PC-3 (cell line): ENCODE measurements at regions of chr4 and their contacts with region 1.

Region 1: DNA sequence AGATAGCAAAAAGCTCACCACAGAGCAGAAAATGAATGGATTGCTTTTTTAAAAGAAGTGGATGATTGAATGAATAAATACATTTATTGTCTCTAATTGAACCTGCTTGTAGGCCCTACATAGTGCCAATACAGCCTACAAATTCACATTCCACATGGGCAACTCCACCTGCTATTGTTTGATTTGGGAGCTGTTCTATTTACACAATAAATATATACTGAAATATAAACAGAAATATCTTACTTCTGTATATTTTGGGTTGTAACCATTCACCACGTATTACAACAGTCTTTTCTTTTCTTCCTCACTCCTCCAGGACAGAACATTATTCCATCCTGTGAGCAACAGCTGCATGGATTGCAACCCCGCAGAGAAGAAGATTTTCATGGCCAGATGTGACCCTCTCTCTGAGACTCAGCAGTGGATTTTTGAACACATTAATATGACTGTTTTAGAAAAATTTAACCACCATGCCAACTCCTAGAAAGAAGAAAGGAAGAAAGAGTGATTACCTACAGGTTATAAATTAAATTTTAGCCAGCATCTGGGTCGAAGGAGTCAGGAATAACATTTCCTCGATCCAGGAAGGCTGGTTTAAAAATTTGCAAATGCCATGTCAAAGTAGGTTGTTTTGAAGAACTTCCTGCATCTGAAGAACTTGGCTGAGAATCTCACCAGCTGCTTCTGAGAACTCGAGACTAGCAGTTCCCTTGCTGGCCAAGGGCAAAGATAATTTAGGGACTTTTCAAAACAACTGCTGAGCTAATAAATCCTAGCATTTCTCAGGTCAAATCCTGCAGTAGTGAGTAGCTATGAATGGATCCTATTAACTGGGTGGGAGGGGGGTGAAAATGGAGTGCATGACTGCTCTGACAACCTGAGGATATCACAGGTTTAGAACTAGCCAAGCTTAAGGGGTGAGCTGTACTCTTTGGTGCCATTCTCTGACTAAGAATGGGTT is 128.7 kb upstream of the GALNT7 start:
- DNase-seq: peak; percentile 41
- ATAC-seq: peak; percentile 53
- H3K4me3 ChIP-seq: peak overlapping the region; percentile 15; the same call in 1 of the 2 replicates
- H3K27ac ChIP-seq: peak overlapping the region; percentile 44
- H3K4me1 ChIP-seq: peaks cover 29% of the 10 kb centered on the region
- H3K27me3 ChIP-seq: no peaks in the 10 kb centered on the region
- CTCF ChIP-seq: no peak

Region 2: GRCh38 chr4:173057901-173058300 is 18.0 kb after region 1 on chr4:
- CTCF ChIA-PET with region 1: no interaction called
- POLR2A ChIA-PET with region 1: no interaction called
- intact Hi-C with region 1: loop called (anchors 1 kb)
- DNase-seq: peak; percentile 20
- ATAC-seq: peak; percentile 59
- H3K4me3 ChIP-seq: 0 out of 2 replicates have a peak overlapping the region, but pooled peaks have one; percentile 22
- H3K27ac ChIP-seq: peak overlapping the region; percentile 40
- H3K4me1 ChIP-seq: peaks cover 13% of the 10 kb centered on the region
- H3K27me3 ChIP-seq: no peaks in the 10 kb centered on the region
- CTCF ChIP-seq: no peak

Region 3: DNA sequence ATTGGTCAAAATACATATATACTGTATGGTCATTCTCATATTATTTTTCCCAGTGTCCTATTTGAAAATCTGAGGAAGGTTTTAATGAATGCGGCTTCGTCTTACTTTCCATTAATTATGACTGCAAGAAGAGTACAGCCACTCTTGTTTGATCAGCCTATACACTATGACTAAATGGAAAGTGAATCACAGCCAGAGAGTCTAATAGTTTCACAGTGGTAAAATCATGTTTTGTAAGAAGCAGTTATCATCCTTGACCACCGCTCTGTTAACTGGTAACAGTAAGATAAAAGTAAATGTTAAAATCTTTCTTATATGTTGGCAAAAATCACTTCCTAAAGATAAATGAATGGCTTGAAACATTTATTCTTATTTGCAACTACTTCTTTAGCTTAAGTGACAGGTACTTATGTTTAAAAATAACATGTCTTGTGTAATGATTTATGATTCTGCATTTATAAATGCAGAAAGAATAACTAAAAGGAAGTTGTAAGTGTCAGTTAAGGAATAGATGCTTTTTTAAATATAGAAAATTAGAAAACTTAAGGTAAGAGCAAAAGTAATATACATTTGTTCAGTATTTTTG is 142.0 kb after region 1 on chr4:
- CTCF ChIA-PET with region 1: no interaction called
- POLR2A ChIA-PET with region 1: no interaction called
- intact Hi-C with region 1: loop called (anchors 1 kb)
- DNase-seq: peak; percentile 77
- ATAC-seq: peak; percentile 80
- H3K4me3 ChIP-seq: peak overlapping the region; percentile 39
- H3K27ac ChIP-seq: peak overlapping the region; percentile 91
- H3K4me1 ChIP-seq: peaks cover 36% of the 10 kb centered on the region
- H3K27me3 ChIP-seq: no peaks in the 10 kb centered on the region
- CTCF ChIP-seq: no peak